ENCODE measurements at regions of chr5 and their contacts with region 1.

Region 1: GRCh38 chr5:141691867-141692532 is 10.0 kb upstream of the ARAP3 start:
- DNase-seq: peak; percentile 90
- ATAC-seq: peak; percentile 81
- H3K4me3 Mint-ChIP-seq: peak overlapping the region; percentile 68
- H3K27ac Mint-ChIP-seq: peak overlapping the region; percentile 46
- H3K4me1 Mint-ChIP-seq: peaks cover 19% of the 10 kb centered on the region
- H3K27me3 Mint-ChIP-seq: peaks cover 9% of the 10 kb centered on the region
- CTCF ChIP-seq: peak; percentile 92

Region 2: GRCh38 chr5:141664732-141665461 is 27.1 kb before region 1 on chr5:
- CTCF ChIA-PET with region 1: interaction called, 93 read pairs
- POLR2A ChIA-PET with region 1: no interaction called
- intact Hi-C with region 1: no loop called
- DNase-seq: peak; percentile 85
- ATAC-seq: peak; percentile 95
- H3K4me3 Mint-ChIP-seq: no peak overlapping the region
- H3K27ac Mint-ChIP-seq: no peak overlapping the region
- H3K4me1 Mint-ChIP-seq: peaks cover 3% of the 10 kb centered on the region
- H3K27me3 Mint-ChIP-seq: no peaks in the 10 kb centered on the region
- CTCF ChIP-seq: peak; percentile 89

Region 3: GRCh38 chr5:141713616-141714309 is 21.8 kb after region 1 on chr5:
- CTCF ChIA-PET with region 1: interaction called, 18 read pairs
- POLR2A ChIA-PET with region 1: interaction called, 3 read pairs
- intact Hi-C with region 1: no loop called
- DNase-seq: no peak
- ATAC-seq: no peak
- H3K4me3 Mint-ChIP-seq: no peak overlapping the region
- H3K27ac Mint-ChIP-seq: no peak overlapping the region
- H3K4me1 Mint-ChIP-seq: no peaks in the 10 kb centered on the region
- H3K27me3 Mint-ChIP-seq: no peaks in the 10 kb centered on the region
- CTCF ChIP-seq: no peak

Region 4: GRCh38 chr5:141817373-141818025 is 125.5 kb after region 1 on chr5:
- CTCF ChIA-PET with region 1: interaction called, 61 read pairs
- POLR2A ChIA-PET with region 1: no interaction called
- intact Hi-C with region 1: loop called (anchors 5 kb)
- DNase-seq: no peak
- ATAC-seq: no peak
- H3K4me3 Mint-ChIP-seq: no peak overlapping the region
- H3K27ac Mint-ChIP-seq: no peak overlapping the region
- H3K4me1 Mint-ChIP-seq: no peaks in the 10 kb centered on the region
- H3K27me3 Mint-ChIP-seq: peaks cover 3% of the 10 kb centered on the region
- CTCF ChIP-seq: no peak

Region 5: GRCh38 chr5:141914199-141914743 is 222.3 kb after region 1 on chr5:
- CTCF ChIA-PET with region 1: interaction called, 11 read pairs
- POLR2A ChIA-PET with region 1: no interaction called
- intact Hi-C with region 1: no loop called
- DNase-seq: peak; percentile 36
- ATAC-seq: peak; percentile 81
- H3K4me3 Mint-ChIP-seq: peak overlapping the region; percentile 29
- H3K27ac Mint-ChIP-seq: no peak overlapping the region
- H3K4me1 Mint-ChIP-seq: peaks cover 11% of the 10 kb centered on the region
- H3K27me3 Mint-ChIP-seq: peaks cover 21% of the 10 kb centered on the region
- CTCF ChIP-seq: peak; percentile 1

Region 6: GRCh38 chr5:141968914-141969608 is 277.1 kb after region 1 on chr5 and contains the start of gene RNF14:
- CTCF ChIA-PET with region 1: interaction called, 204 read pairs
- POLR2A ChIA-PET with region 1: no interaction called
- intact Hi-C with region 1: no loop called
- DNase-seq: peak; percentile 97
- ATAC-seq: peak; percentile 96
- H3K4me3 Mint-ChIP-seq: peak within 1 kb of the TSS; percentile 85
- H3K27ac Mint-ChIP-seq: peak within 1 kb of the TSS; percentile 97
- H3K4me1 Mint-ChIP-seq: peaks cover 33% of the 10 kb centered on the region
- H3K27me3 Mint-ChIP-seq: no peaks in the 10 kb centered on the region
- CTCF ChIP-seq: peak; percentile 99
- total RNA-seq, gene RNF14: 34.1 to 35.0 TPM